AG04449 (cell line): ENCODE measurements at regions of chr2 and their contacts with region 1.

Region 1: DNA sequence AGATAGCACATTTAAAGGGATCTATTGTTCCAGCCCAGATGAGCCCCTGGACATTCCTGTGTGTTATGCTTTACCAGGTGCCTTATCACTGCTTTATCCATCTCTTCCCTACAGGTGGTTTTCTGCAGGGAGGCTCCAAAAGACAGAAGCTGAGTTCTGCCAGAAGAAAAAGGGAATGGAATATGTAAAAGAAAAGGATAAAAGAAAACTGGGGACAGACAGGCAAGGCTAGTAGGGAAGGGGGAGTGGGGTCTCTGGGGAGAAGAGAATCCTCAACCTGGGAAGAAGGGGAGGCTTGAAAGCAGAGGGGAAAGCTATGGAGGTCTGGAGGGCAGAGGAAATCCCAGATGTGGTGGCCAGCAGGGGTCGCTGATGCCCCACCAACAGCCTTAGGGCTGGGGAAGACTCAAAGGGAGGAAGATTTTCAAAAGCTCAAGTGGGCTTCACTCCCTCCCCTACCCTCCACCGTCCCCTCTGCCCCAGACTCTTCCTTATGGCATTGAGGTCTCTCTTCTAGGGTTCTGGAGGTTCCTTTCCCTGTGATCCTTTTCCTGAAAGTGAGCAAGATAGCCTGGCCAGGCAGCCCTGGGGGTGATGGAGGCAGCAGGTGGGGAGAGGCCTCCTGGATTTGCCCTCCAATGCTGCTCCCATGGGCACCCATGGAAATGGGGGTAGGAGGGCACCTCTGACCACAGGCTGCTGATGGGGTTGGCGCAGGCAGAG is 178.1 kb upstream of the PKDCC start:
- DNase-seq: no peak
- H3K4me3 ChIP-seq: no peak overlapping the region
- CTCF ChIP-seq: peak; percentile 87

Region 2: GRCh38 chr2:41595240-41595639 is 274.5 kb before region 1 on chr2:
- CTCF ChIA-PET with region 1: no interaction called
- POLR2A ChIA-PET with region 1: no interaction called
- DNase-seq: no peak
- H3K4me3 ChIP-seq: no peak overlapping the region
- CTCF ChIP-seq: no peak

Region 3: DNA sequence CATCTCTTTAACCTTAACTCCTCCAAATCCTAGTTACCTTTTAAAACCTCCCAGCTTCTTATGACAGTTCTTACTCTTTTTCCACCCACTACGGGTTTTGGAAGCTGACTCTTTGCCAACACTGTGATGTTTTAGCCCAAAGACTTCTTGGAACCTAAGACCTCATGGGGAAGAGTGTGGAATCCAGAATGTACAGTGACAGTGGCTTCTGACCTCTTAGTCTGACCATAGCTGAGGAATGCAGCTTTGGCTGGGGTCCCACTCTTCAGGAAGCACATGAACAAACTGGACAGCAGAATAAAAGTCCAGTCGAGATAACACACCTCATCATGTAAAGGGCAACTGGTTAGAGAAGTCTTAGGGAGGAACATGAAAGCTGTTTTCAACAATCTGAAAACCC is 17.1 kb after region 1 on chr2:
- CTCF ChIA-PET with region 1: interaction called, 55 read pairs
- POLR2A ChIA-PET with region 1: no interaction called
- DNase-seq: no peak
- H3K4me3 ChIP-seq: no peak overlapping the region
- CTCF ChIP-seq: no peak

Region 4: DNA sequence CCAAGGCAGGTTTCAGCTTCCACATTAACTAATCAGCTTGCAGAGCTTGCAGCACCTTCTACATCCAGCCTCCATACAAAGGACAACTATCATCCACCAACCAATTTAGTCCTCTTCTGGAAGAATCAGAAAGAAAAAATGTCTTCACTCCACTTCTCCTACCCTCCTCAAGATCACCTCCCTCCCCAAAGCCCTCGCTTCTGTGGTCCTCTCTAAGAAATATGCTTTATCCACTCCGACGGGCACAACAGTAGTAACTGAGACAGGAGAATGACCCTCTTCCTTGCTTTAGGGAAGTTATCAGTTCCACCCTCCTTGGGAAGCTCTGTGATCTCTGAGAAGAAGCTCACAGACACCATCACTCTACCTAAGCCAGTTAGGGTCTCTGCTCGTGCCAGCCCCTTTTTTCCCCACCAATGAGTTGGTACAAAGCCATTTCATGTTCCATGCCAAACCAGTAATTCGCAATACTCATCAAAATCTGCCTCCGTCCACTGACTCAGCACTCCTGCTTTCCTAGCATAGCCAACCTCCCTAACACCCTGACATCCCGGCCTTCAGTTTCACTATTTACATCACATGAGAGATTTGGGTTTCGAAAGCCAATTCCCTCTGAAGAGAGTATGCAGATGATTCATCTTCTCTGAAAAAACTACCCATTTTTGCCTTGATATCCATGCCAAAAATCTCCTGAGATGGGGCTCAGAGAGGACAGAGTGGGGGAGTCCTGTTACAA is 64.0 kb after region 1 on chr2:
- CTCF ChIA-PET with region 1: interaction called, 14 read pairs
- POLR2A ChIA-PET with region 1: no interaction called
- DNase-seq: peak; percentile 74
- H3K4me3 ChIP-seq: no peak overlapping the region
- CTCF ChIP-seq: no peak

Region 5: GRCh38 chr2:42025151-42025582 is 155.5 kb after region 1 on chr2:
- CTCF ChIA-PET with region 1: interaction called, 11 read pairs
- POLR2A ChIA-PET with region 1: no interaction called
- DNase-seq: no peak
- H3K4me3 ChIP-seq: no peak overlapping the region
- CTCF ChIP-seq: no peak

Region 6: GRCh38 chr2:42072349-42073118 is 202.8 kb after region 1 on chr2:
- CTCF ChIA-PET with region 1: interaction called, 1,155 read pairs
- POLR2A ChIA-PET with region 1: no interaction called
- DNase-seq: no peak
- H3K4me3 ChIP-seq: no peak overlapping the region
- CTCF ChIP-seq: no peak